ENCODE measurements at regions of chr6 and their contacts with region 1.

Region 1: GRCh38 chr6:27902335-27903314 is 9.6 kb downstream of the OR2B2 start:
- H3K4me3 Mint-ChIP-seq: peak overlapping the region; percentile 78
- H3K27ac Mint-ChIP-seq: peak overlapping the region; percentile 66
- H3K4me1 Mint-ChIP-seq: no peaks in the 10 kb centered on the region
- H3K27me3 Mint-ChIP-seq: peaks cover 6% of the 10 kb centered on the region

Region 2: DNA sequence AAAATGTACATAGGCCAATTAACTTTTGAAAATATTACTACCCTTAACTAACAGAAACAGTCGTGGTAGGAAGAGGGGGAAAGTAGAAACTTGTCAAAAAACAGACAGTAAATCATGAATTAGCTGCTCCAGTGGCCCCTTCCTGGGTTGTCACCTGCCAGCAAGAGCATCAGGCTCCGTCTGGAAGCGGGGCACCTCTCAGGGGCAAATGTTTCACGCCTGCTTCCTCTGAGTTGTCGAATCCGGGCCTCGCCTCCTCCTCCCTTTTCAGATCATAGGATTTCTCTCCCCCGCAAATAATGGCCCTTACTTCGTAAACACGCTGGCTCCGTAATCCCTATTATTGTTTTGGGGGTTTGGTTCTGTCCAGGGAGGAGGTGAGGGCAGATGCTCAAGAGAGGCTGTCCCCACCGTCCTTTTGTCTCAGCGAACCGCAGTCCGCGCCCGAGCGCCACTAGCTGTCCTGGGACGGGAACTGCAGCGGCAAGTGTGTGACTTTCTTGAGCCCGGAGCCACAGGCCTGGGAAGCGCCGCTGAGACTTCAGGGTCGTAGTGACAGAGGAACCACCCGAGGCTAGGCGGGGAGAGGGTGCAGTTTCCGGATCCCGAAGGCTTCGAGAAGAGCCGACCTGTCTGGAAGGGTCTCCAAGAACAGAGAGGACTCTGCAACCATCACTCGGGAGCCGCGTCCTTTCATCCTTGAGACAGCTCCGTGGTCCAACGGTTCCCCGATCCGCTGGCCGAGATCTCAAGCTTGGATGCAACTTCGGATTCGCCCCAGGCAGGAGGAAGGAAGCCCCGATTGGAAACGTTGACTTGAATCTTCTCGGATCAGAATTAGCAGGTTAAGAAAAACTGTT is 215.2 kb before region 1 on chr6:
- intact Hi-C with region 1: loop called (anchors 10 kb)
- H3K4me3 Mint-ChIP-seq: peak overlapping the region; percentile 78
- H3K27ac Mint-ChIP-seq: no peak overlapping the region
- H3K4me1 Mint-ChIP-seq: peaks cover 11% of the 10 kb centered on the region
- H3K27me3 Mint-ChIP-seq: peaks cover 65% of the 10 kb centered on the region

Region 3: GRCh38 chr6:27864906-27865849 is 37.4 kb before region 1 on chr6:
- intact Hi-C with region 1: no loop called
- H3K4me3 Mint-ChIP-seq: peak overlapping the region; percentile 89
- H3K27ac Mint-ChIP-seq: peak overlapping the region; percentile 98
- H3K4me1 Mint-ChIP-seq: peaks cover 53% of the 10 kb centered on the region
- H3K27me3 Mint-ChIP-seq: peaks cover 12% of the 10 kb centered on the region

Region 4: DNA sequence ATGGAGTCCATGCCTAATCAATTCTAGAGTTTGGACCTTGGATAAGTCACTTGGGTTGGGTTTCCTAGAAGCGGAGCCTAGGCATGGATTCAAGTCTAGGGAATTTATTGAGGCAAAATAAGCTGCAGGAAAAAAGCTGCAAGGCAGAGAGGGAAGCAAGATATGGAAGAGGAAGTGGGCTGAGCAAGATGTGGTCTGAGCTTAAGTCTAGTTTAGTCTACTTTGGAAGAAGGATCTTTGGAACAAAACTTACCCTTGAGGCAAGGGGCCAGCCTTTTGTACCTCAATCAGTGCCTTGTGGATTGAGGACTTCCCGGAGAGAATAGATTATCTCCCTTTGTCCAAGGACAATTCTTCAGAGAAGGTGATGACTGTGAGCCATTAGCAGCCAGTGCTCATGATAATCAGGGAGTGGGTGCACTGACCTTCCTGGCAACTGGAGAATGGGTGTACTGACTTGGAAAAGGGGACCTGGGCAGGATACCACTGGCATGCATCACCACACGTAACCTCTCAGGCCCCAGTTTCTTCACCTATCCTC is 333.4 kb after region 1 on chr6:
- intact Hi-C with region 1: loop called (anchors 10 kb)
- H3K4me3 Mint-ChIP-seq: no peak overlapping the region
- H3K27ac Mint-ChIP-seq: peak overlapping the region; percentile 76
- H3K4me1 Mint-ChIP-seq: peaks cover 42% of the 10 kb centered on the region
- H3K27me3 Mint-ChIP-seq: no peaks in the 10 kb centered on the region

Region 5: GRCh38 chr6:28355743-28356665 is 453.4 kb after region 1 on chr6:
- intact Hi-C with region 1: loop called (anchors 10 kb)
- H3K4me3 Mint-ChIP-seq: peak overlapping the region; percentile 82
- H3K27ac Mint-ChIP-seq: peak overlapping the region; percentile 87
- H3K4me1 Mint-ChIP-seq: peaks cover 62% of the 10 kb centered on the region
- H3K27me3 Mint-ChIP-seq: no peaks in the 10 kb centered on the region

Measured in dendritic cell treated with granulocyte-macrophage colony-stimulating factor and Interleukin-4, amounts not matched to agents 40 ng/mL and 50 ng/mL, for 4 days (primary cell).